ENCODE measurements at regions of chr3 and their contacts with region 1.

Region 1: GRCh38 chr3:57692259-57693147 is at the start of gene DENND6A:
- DNase-seq: peak; percentile 88 to 96 (median 94)
- ATAC-seq: peak; percentile 89
- H3K4me3 ChIP-seq: peak within 1 kb of the TSS; percentile 81
- H3K4me3 Mint-ChIP-seq: peak within 1 kb of the TSS; percentile 82 to 98 (median 93)
- H3K27ac ChIP-seq: peak within 1 kb of the TSS; percentile 87
- H3K27ac Mint-ChIP-seq: peak within 1 kb of the TSS; percentile 88 to 96 (median 93)
- H3K4me1 ChIP-seq: peaks cover 30 to 35% of the 10 kb centered on the region in 2 donors
- H3K4me1 Mint-ChIP-seq: peaks cover 19 to 42% (median 39%) of the 10 kb centered on the region in 7 donors
- H3K27me3 ChIP-seq: no peaks in the 10 kb centered on the region
- H3K27me3 Mint-ChIP-seq: peaks cover 0 to 2% (median 0%) of the 10 kb centered on the region in 5 donors
- total RNA-seq, gene DENND6A: 31.3 to 76.6 (median 40.8) TPM

Region 2: DNA sequence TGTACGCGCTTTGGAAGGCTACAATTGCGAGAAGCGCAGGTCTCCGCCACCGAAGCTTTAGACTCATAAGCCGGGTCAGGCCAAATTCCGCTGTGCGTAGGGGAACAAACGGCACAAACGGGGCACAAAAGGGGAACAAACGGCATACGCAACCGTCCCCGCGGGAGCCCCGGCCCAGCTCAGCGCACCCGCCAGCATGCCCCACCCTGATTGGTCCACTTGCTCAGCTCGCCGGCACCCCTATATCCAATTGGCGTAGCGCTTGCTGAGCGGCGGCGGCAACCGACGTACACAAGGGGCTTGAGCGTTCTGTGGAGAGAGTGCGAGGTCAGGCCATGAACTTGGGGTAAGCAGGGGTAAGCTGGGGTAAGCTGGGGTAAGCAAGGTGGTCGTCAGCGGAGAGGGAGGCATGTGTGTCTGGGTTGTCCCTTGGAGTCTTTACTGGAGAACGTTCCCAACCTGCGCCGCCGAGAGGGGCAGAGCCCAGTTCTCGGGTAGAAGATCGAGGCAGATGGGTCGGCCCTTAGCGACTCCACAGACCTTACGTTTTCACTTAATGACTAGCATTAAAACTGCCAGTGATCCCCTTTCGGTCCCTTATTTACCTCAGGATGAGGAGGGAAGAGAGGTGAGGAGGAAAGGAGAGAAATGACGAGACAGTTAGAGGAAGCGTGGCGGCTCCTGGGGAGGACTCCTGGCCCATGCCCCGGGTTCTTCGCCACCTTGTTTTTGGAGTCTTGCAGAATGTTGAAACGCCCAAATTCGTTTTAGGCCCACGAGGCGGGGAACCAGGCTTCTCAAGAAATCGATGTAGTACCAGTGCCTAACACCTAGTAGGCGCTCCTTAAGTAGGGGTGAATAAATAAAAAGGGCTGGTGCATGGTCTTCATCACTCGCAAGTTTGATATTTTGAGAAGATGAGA is 1135.3 kb before region 1 on chr3 and contains the start of gene CCDC66:
- CTCF ChIA-PET with region 1: no interaction called
- POLR2A ChIA-PET with region 1: no interaction called
- intact Hi-C with region 1: loop called in 1 of 2 experiments (anchors 1 kb)
- DNase-seq: peak; percentile 85 to 95 (median 93)
- ATAC-seq: peak; percentile 96
- H3K4me3 ChIP-seq: peak within 1 kb of the TSS; percentile 96
- H3K4me3 Mint-ChIP-seq: peak within 1 kb of the TSS; percentile 91 to 100 (median 98)
- H3K27ac ChIP-seq: peak within 1 kb of the TSS; percentile 99
- H3K27ac Mint-ChIP-seq: peak within 1 kb of the TSS; percentile 93 to 100 (median 98)
- H3K4me1 ChIP-seq: peaks cover 9 to 17% of the 10 kb centered on the region in 2 donors
- H3K4me1 Mint-ChIP-seq: peaks cover 12 to 51% (median 38%) of the 10 kb centered on the region in 7 donors
- H3K27me3 ChIP-seq: no peaks in the 10 kb centered on the region
- H3K27me3 Mint-ChIP-seq: peaks cover 0 to 25% (median 0%) of the 10 kb centered on the region in 5 donors
- total RNA-seq, gene CCDC66: 38.6 to 115 (median 77.3) TPM

Region 3: GRCh38 chr3:57555738-57556458 is 136.6 kb before region 1 on chr3 and contains the start of gene PDE12:
- CTCF ChIA-PET with region 1: no interaction called
- POLR2A ChIA-PET with region 1: interaction called, 13 read pairs
- intact Hi-C with region 1: loop called (anchors 1 to 2 kb)
- DNase-seq: peak; percentile 68 to 87 (median 81)
- ATAC-seq: peak; percentile 86
- H3K4me3 ChIP-seq: peak within 1 kb of the TSS; percentile 74
- H3K4me3 Mint-ChIP-seq: peak within 1 kb of the TSS; percentile 85 to 99 (median 92)
- H3K27ac ChIP-seq: peak within 1 kb of the TSS; percentile 96
- H3K27ac Mint-ChIP-seq: peak within 1 kb of the TSS; percentile 94 to 99 (median 98)
- H3K4me1 ChIP-seq: peaks cover 22 to 26% of the 10 kb centered on the region in 2 donors
- H3K4me1 Mint-ChIP-seq: peaks cover 13 to 50% (median 39%) of the 10 kb centered on the region in 7 donors
- H3K27me3 ChIP-seq: no peaks in the 10 kb centered on the region
- H3K27me3 Mint-ChIP-seq: no peaks in the 10 kb centered on the region
- total RNA-seq, gene PDE12: 24.0 to 35.5 (median 27.8) TPM

Region 4: GRCh38 chr3:57681691-57682090 is 10.8 kb before region 1 on chr3:
- CTCF ChIA-PET with region 1: interaction called, 3 read pairs
- POLR2A ChIA-PET with region 1: interaction called, 12 read pairs
- intact Hi-C with region 1: loop called in 1 of 2 experiments (anchors 1 kb)
- DNase-seq: no peak
- ATAC-seq: no peak
- H3K4me3 ChIP-seq: no peak overlapping the region
- H3K4me3 Mint-ChIP-seq: peak overlapping the region in 3 of 10 donors; percentile 37 to 70 (median 62)
- H3K27ac ChIP-seq: no peak overlapping the region
- H3K27ac Mint-ChIP-seq: peak overlapping the region in 1 of 9 donors; percentile 42
- H3K4me1 ChIP-seq: peaks cover 21 to 24% of the 10 kb centered on the region in 2 donors
- H3K4me1 Mint-ChIP-seq: peaks cover 39 to 82% (median 75%) of the 10 kb centered on the region in 7 donors
- H3K27me3 ChIP-seq: no peaks in the 10 kb centered on the region
- H3K27me3 Mint-ChIP-seq: no peaks in the 10 kb centered on the region

Region 5: DNA sequence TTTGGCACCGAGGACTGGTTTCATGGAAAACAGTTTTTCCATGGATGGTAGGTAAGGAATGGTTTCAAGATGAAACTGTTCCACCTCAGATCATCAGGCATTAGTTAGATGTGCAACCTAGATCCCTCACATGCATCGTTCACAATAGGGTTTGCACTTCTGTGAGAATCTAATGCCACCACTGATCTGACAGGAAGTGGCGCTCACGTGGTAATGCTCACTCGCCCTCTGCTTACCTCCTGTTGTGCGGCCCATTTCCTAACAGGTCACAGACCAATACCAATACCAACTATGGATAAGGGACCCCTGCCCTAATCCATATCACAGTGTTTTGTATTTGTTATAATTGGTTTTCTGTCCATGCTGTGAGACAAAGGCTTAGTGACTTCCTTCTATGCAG is 122.5 kb after region 1 on chr3:
- CTCF ChIA-PET with region 1: no interaction called
- POLR2A ChIA-PET with region 1: no interaction called
- intact Hi-C with region 1: loop called in 1 of 2 experiments (anchors 5 kb)
- DNase-seq: peak in 6 of 9 donors; percentile 20 to 38 (median 34)
- ATAC-seq: peak; percentile 86
- H3K4me3 ChIP-seq: peak overlapping the region; percentile 5
- H3K4me3 Mint-ChIP-seq: peak overlapping the region; percentile 22 to 82 (median 64)
- H3K27ac ChIP-seq: no peak overlapping the region
- H3K27ac Mint-ChIP-seq: peak overlapping the region in 8 of 9 donors; percentile 25 to 91 (median 75)
- H3K4me1 ChIP-seq: peaks cover 6 to 21% of the 10 kb centered on the region in 2 donors
- H3K4me1 Mint-ChIP-seq: peaks cover 21 to 66% (median 52%) of the 10 kb centered on the region in 7 donors
- H3K27me3 ChIP-seq: no peaks in the 10 kb centered on the region
- H3K27me3 Mint-ChIP-seq: no peaks in the 10 kb centered on the region

Region 6: DNA sequence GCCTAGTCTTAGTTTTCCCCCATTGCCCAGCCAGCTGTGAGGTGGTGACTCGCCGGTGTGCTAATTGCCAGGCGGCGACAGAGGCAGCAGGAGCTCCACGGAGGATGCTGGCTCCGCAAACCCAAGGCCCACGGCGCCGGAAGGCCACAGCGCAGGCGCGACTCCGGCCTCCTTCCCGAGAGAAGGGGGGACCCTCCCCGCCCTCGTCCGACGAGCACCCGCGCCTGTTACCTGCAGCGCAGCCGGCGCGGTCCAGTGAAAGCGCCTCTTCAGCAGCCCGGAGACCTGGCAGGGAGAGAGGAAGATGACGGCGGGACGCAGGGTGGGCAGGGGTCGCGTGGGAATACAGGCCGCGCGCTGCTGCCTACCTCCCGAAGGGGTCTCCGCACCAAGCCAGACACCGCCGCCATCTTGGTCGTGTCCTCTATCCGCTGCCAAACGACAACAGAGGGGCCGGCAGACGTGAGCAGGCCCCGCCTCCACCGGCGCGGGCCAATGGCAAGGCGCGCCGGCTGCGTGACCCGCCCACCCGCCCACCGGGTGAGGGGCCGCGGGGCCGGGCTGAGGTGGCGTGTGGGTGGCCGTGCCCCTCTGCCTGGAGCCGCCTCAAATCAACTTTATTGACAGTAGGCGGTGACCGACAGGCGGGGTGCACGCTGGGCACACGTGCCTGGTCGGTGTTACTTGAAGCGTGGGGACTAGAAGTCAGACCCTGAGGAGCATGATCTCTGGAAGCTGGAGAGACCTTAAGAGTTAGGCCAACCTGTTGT is 741.1 kb after region 1 on chr3 and contains the start of gene PDHB:
- CTCF ChIA-PET with region 1: no interaction called
- POLR2A ChIA-PET with region 1: no interaction called
- intact Hi-C with region 1: loop called in 1 of 2 experiments (anchors 2 kb)
- DNase-seq: peak; percentile 78 to 91 (median 90)
- ATAC-seq: peak; percentile 98
- H3K4me3 ChIP-seq: peak within 1 kb of the TSS; percentile 92
- H3K4me3 Mint-ChIP-seq: peak within 1 kb of the TSS; percentile 90 to 98 (median 95)
- H3K27ac ChIP-seq: peak within 1 kb of the TSS; percentile 81
- H3K27ac Mint-ChIP-seq: peak within 1 kb of the TSS; percentile 94 to 98 (median 97)
- H3K4me1 ChIP-seq: peaks cover 14 to 15% of the 10 kb centered on the region in 2 donors
- H3K4me1 Mint-ChIP-seq: peaks cover 15 to 34% (median 27%) of the 10 kb centered on the region in 7 donors
- H3K27me3 ChIP-seq: no peaks in the 10 kb centered on the region
- H3K27me3 Mint-ChIP-seq: peaks cover 0 to 9% (median 0%) of the 10 kb centered on the region in 5 donors
- total RNA-seq, gene PDHB: 30.1 to 58.1 (median 54.0) TPM

Measured in naive thymus-derived CD4-positive, alpha-beta T cell (primary cell).